Activated T-helper 1 cell treated with anti-CD3 and anti-CD28 coated beads, Interleukin-12 subunit alpha, Interleukin-12 subunit beta, Interleukin-2, Interleukin-4 antibody, amounts not matched to agents 30 ng/mL and 10 ng/mL and 1 ng/mL, durations not matched to agents 14 hours and 24 hours and 36 hours (primary cell): ENCODE measurements at regions of chr19 and their contacts with region 1.

Region 1: GRCh38 chr19:662962-663681 is at the start of gene RNF126:
- DNase-seq: peak; percentile 84
- H3K4me3 Mint-ChIP-seq: peak within 1 kb of the TSS; percentile 95
- H3K27ac Mint-ChIP-seq: peak within 1 kb of the TSS; percentile 97
- H3K4me1 Mint-ChIP-seq: peaks cover 33% of the 10 kb centered on the region
- H3K27me3 Mint-ChIP-seq: no peaks in the 10 kb centered on the region
- total RNA-seq, gene RNF126: 107 and 110 TPM in 2 replicates

Region 2: DNA sequence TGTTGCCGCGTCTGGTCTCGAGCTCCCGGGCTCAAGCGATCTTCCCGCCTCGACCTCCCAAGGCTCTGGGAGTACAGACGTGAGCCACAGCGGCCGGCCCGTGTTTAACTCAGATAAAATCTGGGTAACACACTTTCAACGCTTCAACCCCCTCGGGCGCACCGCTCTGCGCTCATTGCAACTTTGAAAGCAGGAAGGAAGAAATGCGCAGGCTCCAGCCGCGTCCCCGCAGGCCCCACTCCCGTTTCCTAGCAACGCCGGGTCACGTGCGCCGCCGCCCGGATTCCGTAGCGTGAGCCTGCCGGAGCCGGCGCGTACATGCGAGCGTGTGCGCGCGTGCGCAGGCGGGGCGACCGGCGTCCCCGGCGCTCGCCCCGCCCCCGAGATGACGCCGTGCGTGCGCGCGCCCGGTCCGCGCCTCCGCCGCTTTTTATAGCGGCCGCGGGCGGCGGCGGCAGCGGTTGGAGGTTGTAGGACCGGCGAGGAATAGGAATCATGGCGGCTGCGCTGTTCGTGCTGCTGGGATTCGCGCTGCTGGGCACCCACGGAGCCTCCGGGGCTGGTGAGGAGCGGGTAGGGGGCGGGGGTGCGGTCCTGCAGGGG is 90.9 kb before region 1 on chr19 and contains the start of gene BSG:
- intact Hi-C with region 1: loop called (anchors 1 kb)
- DNase-seq: peak; percentile 99
- H3K4me3 Mint-ChIP-seq: peak within 1 kb of the TSS; percentile 88
- H3K27ac Mint-ChIP-seq: peak within 1 kb of the TSS; percentile 99
- H3K4me1 Mint-ChIP-seq: peaks cover 25% of the 10 kb centered on the region
- H3K27me3 Mint-ChIP-seq: peaks cover 6% of the 10 kb centered on the region
- total RNA-seq, gene BSG: 307 and 308 TPM in 2 replicates

Region 3: GRCh38 chr19:610801-611505 is 52.2 kb before region 1 on chr19:
- intact Hi-C with region 1: loop called (anchors 2 kb)
- DNase-seq: peak; percentile 56
- H3K4me3 Mint-ChIP-seq: peak overlapping the region; percentile 87
- H3K27ac Mint-ChIP-seq: peak overlapping the region; percentile 98
- H3K4me1 Mint-ChIP-seq: peaks cover 14% of the 10 kb centered on the region
- H3K27me3 Mint-ChIP-seq: no peaks in the 10 kb centered on the region

Region 4: DNA sequence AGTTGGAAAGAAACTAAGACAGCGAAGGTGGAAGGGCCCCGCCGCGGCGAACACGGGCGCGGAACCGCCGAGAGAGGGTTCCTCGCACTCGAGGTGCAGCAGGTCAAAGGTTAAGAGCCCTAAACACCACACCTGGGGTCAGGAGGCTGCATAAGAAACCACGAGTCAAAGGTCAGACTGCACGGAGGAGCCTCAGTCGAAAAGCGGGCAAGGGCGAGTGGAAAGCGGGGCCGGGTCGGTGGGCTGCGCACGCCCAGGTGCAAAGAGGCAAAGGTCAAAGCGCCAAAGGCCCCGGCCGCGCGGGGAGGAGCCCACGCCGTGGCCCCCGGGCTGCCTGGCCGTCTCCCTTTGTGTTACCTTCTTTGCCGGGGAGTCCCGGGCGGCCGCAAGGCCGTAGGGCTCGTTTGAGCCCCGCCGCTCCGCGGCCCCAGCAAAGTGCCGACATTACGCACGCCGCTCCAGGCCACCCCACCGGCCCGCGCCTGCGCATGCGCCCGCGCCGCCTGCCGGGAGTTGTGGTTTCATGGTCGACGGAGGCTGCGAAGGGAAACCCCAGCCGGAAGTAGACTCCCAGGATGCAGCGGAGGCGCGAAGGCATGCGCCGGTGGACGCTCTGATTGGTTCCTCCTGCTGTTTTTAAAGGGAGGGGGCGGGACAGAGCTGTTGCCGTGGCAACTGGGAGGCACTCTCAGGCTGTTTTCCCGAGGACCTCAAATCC is 29.9 kb before region 1 on chr19 and contains the start of gene POLRMT:
- intact Hi-C with region 1: loop called (anchors 1 kb)
- DNase-seq: peak; percentile 96
- H3K4me3 Mint-ChIP-seq: peak within 1 kb of the TSS; percentile 96
- H3K27ac Mint-ChIP-seq: peak within 1 kb of the TSS; percentile 95
- H3K4me1 Mint-ChIP-seq: peaks cover 6% of the 10 kb centered on the region
- H3K27me3 Mint-ChIP-seq: no peaks in the 10 kb centered on the region
- total RNA-seq, gene POLRMT: 103 and 104 TPM in 2 replicates

Region 5: GRCh38 chr19:639253-640160 is 23.6 kb before region 1 on chr19 and contains the start of gene FGF22:
- intact Hi-C with region 1: loop called (anchors 1 kb)
- DNase-seq: peak; percentile 90
- H3K4me3 Mint-ChIP-seq: peak within 1 kb of the TSS; percentile 81
- H3K27ac Mint-ChIP-seq: peak within 1 kb of the TSS; percentile 71
- H3K4me1 Mint-ChIP-seq: peaks cover 6% of the 10 kb centered on the region
- H3K27me3 Mint-ChIP-seq: peaks cover 5% of the 10 kb centered on the region
- total RNA-seq, gene FGF22: not detected in 2 replicates

Region 6: GRCh38 chr19:732148-733069 is 69.3 kb after region 1 on chr19:
- intact Hi-C with region 1: loop called (anchors 1 kb)
- DNase-seq: no peak
- H3K4me3 Mint-ChIP-seq: no peak overlapping the region
- H3K27ac Mint-ChIP-seq: no peak overlapping the region
- H3K4me1 Mint-ChIP-seq: no peaks in the 10 kb centered on the region
- H3K27me3 Mint-ChIP-seq: no peaks in the 10 kb centered on the region